ENCODE measurements at regions of chr22 and their contacts with region 1.

Region 1: GRCh38 chr22:45268958-45269844 is 15.5 kb upstream of the UPK3A start:
- ATAC-seq: peak; percentile 61 to 91 (median 66)
- H3K4me3 ChIP-seq: peak overlapping the region; percentile 35 to 50 (median 47)
- H3K27ac ChIP-seq: peak overlapping the region; percentile 85 to 90
- H3K4me1 ChIP-seq: peaks cover 2 to 3% of the 10 kb centered on the region in 2 donors

Region 2: GRCh38 chr22:45101515-45102227 is 167.5 kb before region 1 on chr22:
- in situ Hi-C with region 1: loop called in 1 of 9 experiments (anchors 25 kb)
- ATAC-seq: peak; percentile 55 to 99 (median 92)
- H3K4me3 ChIP-seq: no peak overlapping the region
- H3K27ac ChIP-seq: no peak overlapping the region
- H3K4me1 ChIP-seq: peaks cover 0 to 3% of the 10 kb centered on the region in 2 donors

Region 3: GRCh38 chr22:45435544-45436139 is 166.4 kb after region 1 on chr22:
- in situ Hi-C with region 1: loop called in 5 of 9 experiments (anchors 10 to 25 kb)
- ATAC-seq: peak; percentile 94 to 99 (median 97)
- H3K4me3 ChIP-seq: no peak overlapping the region
- H3K27ac ChIP-seq: no peak overlapping the region
- H3K4me1 ChIP-seq: peaks cover 0 to 5% of the 10 kb centered on the region in 2 donors

Measured in motor neuron (in vitro differentiated cells).